A549 (cell line): ENCODE measurements at regions of chr11 and their contacts with region 1.

Region 1: GRCh38 chr11:6269994-6270393 is 10.4 kb downstream of the CCKBR start:
- DNase-seq: peak in 1 of 2 experiments; percentile 22
- ATAC-seq: peak in 1 of 2 experiments; percentile 73; a peak in 3 of 6 replicates
- H3K4me3 ChIP-seq: no peak overlapping the region
- H3K27ac ChIP-seq: no peak overlapping the region
- H3K4me1 ChIP-seq: no peaks in the 10 kb centered on the region
- CTCF ChIP-seq: no peak
- EP300 ChIP-seq: no peak
- POLR2A ChIP-seq: no peak
- RAD21 ChIP-seq: 0 out of 5 replicates have a peak, but pooled peaks of 1 of the 2 experiments have one; percentile 7

Region 2: DNA sequence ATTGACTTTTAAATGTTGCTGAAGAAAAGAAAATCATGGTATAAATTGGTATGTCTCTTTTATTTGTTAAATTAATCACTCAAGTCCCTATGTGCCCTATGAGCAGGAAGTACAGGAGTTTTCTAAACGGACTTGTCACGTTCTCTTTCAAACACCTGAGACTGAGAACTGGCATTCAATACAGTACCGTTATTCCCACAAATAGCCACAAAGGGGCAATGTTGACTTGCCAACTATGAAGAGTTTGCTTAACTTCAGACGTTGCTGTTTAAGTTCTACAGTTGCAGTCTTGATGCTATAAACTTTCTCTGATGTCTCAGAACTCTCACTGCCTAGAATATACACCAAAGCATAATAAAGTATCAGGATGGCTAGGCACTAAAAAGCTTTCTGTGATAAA is 247.0 kb before region 1 on chr11:
- CTCF ChIA-PET with region 1: interaction called, 10 read pairs
- POLR2A ChIA-PET with region 1: no interaction called
- DNase-seq: peak; percentile 13 to 57
- ATAC-seq: peak; percentile 82
- H3K4me3 ChIP-seq: no peak overlapping the region
- H3K27ac ChIP-seq: no peak overlapping the region
- H3K4me1 ChIP-seq: no peaks in the 10 kb centered on the region
- CTCF ChIP-seq: peak; percentile 46
- EP300 ChIP-seq: no peak
- POLR2A ChIP-seq: no peak
- RAD21 ChIP-seq: peak; percentile 61 to 68